ENCODE measurements at regions of chr3 and their contacts with region 1.

Region 1: DNA sequence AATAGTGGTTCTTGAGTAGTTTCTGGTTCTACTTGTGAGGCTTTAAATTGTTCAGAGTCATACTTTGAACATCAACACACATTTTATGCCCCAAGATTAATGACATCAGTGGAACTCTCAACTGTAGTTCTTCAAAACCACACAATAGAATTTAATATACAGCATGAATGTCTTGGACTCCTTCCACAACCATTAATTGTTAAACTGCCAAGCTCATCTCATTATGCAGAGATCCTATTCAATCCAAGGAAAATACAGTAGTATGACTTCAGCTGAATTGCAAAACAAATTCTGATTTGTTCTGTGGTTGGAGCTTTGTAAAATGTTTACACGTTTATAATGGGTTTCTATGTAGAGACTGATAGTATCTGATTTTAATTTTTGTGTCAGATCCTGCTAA is 199.2 kb upstream of the SLC2A2 start:
- DNase-seq: no peak
- H3K4me3 Mint-ChIP-seq: no peak overlapping the region
- H3K27ac Mint-ChIP-seq: peak overlapping the region; percentile 69
- H3K4me1 Mint-ChIP-seq: peaks cover 56% of the 10 kb centered on the region
- H3K27me3 Mint-ChIP-seq: no peaks in the 10 kb centered on the region

Region 2: GRCh38 chr3:171248425-171249111 is 22.9 kb after region 1 on chr3:
- intact Hi-C with region 1: loop called (anchors 1 kb)
- DNase-seq: no peak
- H3K4me3 Mint-ChIP-seq: no peak overlapping the region
- H3K27ac Mint-ChIP-seq: no peak overlapping the region
- H3K4me1 Mint-ChIP-seq: peaks cover 40% of the 10 kb centered on the region
- H3K27me3 Mint-ChIP-seq: no peaks in the 10 kb centered on the region

Region 3: GRCh38 chr3:171255236-171255806 is 29.6 kb after region 1 on chr3:
- intact Hi-C with region 1: loop called (anchors 1 kb)
- DNase-seq: no peak
- H3K4me3 Mint-ChIP-seq: peak overlapping the region; percentile 60
- H3K27ac Mint-ChIP-seq: peak overlapping the region; percentile 94
- H3K4me1 Mint-ChIP-seq: peaks cover 92% of the 10 kb centered on the region
- H3K27me3 Mint-ChIP-seq: no peaks in the 10 kb centered on the region

Region 4: DNA sequence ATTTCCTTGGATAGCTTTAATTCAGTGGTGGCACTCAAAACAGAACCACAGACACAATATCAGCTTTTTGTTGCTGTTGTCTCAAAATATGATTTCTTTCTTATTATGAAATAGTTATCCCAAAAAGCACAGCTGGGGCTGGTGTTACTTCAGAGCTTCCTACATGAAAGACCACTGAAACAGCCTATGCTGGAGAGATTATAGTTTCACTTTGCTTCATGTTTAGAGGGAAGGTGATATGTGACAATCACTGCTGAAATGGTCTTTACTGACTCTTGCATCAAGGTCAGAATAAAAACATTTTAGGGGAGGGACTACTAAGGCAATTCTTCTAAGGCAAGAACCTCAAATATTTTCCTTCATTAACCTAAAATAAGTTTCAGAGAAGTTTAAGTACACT is 43.8 kb after region 1 on chr3:
- intact Hi-C with region 1: loop called (anchors 5 kb)
- DNase-seq: no peak
- H3K4me3 Mint-ChIP-seq: peak overlapping the region; percentile 46
- H3K27ac Mint-ChIP-seq: no peak overlapping the region
- H3K4me1 Mint-ChIP-seq: peaks cover 78% of the 10 kb centered on the region
- H3K27me3 Mint-ChIP-seq: no peaks in the 10 kb centered on the region